Prostate gland (tissue), 2 donors: ENCODE measurements at regions of chr1 and their contacts with region 1.

Region 1: DNA sequence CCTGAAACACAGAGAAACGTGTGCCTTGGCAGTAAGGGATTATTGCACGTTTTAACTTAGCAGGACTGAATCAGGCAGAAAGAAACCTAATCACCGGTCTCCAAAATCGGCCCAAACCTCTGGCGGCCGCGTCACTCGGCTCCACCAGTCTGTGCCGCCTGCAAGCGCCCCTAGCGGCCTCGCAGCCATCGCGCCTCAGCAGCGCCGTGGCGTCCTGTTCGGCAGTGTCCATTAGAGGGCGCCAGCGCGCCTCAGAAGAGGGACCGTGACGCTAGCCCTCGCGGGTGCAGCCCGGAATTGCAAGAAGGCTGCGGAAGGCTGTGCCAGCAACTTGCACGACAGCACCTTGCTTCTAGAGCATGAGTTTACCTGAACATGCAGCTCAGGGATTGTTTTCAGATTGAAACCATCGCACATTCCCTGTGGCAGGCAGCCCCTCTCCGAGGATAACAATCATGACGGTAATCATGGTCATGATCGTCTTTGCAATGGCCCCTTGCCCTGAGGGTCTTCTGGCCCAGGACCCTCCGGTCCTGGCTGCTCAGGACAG is 164.4 kb downstream of the TRIM33 start:
- DNase-seq: peak; percentile 93
- H3K4me3 ChIP-seq: peak overlapping the region; percentile 34 to 42
- H3K27ac ChIP-seq: peak overlapping the region; percentile 79 to 86
- H3K4me1 ChIP-seq: peaks cover 7% of the 10 kb centered on the region
- H3K27me3 ChIP-seq: no peaks in the 10 kb centered on the region
- CTCF ChIP-seq: peak; percentile 99 to 100 (median 100)
- POLR2A ChIP-seq: no peak

Region 2: GRCh38 chr1:114053604-114054003 is 293.0 kb before region 1 on chr1:
- intact Hi-C with region 1: no loop called
- DNase-seq: no peak
- H3K4me3 ChIP-seq: no peak overlapping the region
- H3K27ac ChIP-seq: no peak overlapping the region
- H3K4me1 ChIP-seq: no peaks in the 10 kb centered on the region
- H3K27me3 ChIP-seq: no peaks in the 10 kb centered on the region
- CTCF ChIP-seq: no peak
- POLR2A ChIP-seq: no peak

Region 3: GRCh38 chr1:114428083-114428749 is 81.7 kb after region 1 on chr1:
- intact Hi-C with region 1: loop called (anchors 2 kb)
- DNase-seq: no peak
- H3K4me3 ChIP-seq: no peak overlapping the region
- H3K27ac ChIP-seq: no peak overlapping the region
- H3K4me1 ChIP-seq: no peaks in the 10 kb centered on the region
- H3K27me3 ChIP-seq: no peaks in the 10 kb centered on the region
- CTCF ChIP-seq: peak in 2 of 4 experiments; percentile 33 to 43
- POLR2A ChIP-seq: no peak

Region 4: DNA sequence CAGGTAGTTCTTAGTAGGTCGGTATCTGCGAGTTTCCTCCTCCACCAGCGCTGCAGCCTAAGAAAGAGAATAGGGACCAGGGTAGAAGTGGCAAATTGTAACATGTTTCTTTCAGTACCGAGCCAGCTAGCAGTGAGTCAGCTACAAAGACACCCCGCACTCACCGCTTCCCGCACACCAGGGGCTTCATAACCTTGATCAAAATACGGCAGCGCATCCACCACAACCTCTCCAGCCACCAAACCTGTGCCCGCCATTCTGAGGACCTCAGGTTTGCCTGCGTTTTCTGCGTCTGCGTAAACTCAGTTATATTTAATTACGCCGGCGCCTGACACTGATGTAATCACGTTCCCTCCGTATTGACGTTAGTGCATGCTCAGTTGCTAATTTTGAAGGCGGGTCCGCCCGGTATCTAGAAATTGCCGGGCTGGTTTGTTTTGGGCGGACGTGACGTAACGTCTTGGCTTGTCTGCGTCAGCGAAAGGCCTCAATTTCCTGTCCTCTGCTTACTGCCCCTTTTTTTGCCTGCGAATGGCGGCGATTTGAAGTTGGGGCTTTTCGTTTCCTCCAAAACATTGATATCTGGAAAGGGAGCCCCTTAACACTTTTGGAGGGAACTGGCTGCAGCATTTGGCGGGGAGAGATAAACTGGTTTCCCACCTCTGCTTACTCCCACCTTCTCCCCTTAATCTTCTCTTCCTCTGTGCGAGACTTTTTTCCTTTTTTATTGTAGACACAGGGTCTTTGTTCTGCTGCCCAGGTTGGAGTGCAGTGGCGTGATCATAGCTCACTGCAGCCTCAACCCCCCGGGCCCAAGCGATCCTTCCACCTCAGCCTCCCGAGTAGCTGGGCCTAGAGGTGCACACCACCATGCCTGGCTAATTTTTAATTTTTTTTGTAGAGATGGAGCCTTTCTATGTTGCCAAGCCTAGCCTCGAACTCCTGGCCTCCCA is 235.1 kb after region 1 on chr1 and contains the start of gene BCAS2:
- intact Hi-C with region 1: loop called (anchors 5 kb)
- DNase-seq: peak; percentile 98
- H3K4me3 ChIP-seq: peak within 1 kb of the TSS; percentile 53 to 62
- H3K27ac ChIP-seq: peak within 1 kb of the TSS; percentile 88 to 90
- H3K4me1 ChIP-seq: peaks cover 2% of the 10 kb centered on the region
- H3K27me3 ChIP-seq: no peaks in the 10 kb centered on the region
- CTCF ChIP-seq: peak in 2 of 4 experiments; percentile 10 to 23
- POLR2A ChIP-seq: peak; percentile 92
- total RNA-seq, gene BCAS2: 35.9 to 38.5 TPM

Region 5: GRCh38 chr1:114670083-114671010 is 323.8 kb after region 1 on chr1:
- intact Hi-C with region 1: loop called (anchors 5 kb)
- DNase-seq: peak; percentile 95
- H3K4me3 ChIP-seq: peak overlapping the region; percentile 48 to 74
- H3K27ac ChIP-seq: peak overlapping the region; percentile 68 to 82
- H3K4me1 ChIP-seq: no peaks in the 10 kb centered on the region
- H3K27me3 ChIP-seq: no peaks in the 10 kb centered on the region
- CTCF ChIP-seq: peak in 2 of 4 experiments; percentile 50 to 64
- POLR2A ChIP-seq: peak; percentile 75